ENCODE measurements at regions of chr1 and their contacts with region 1.

Region 1: GRCh38 chr1:159071970-159072582 is 4.5 kb downstream of the AIM2 start:
- DNase-seq: no peak
- ATAC-seq: no peak
- H3K4me3 ChIP-seq: no peak overlapping the region
- H3K27ac ChIP-seq: no peak overlapping the region
- H3K4me1 ChIP-seq: no peaks in the 10 kb centered on the region
- H3K27me3 ChIP-seq: no peaks in the 10 kb centered on the region
- CTCF ChIP-seq: peak; percentile 59

Region 2: GRCh38 chr1:158203693-158204457 is 868.2 kb before region 1 on chr1:
- intact Hi-C with region 1: loop called in 1 of 2 experiments (anchors 5 kb)
- DNase-seq: no peak
- ATAC-seq: peak in 2 of 4 donors; percentile 54 to 61
- H3K4me3 ChIP-seq: no peak overlapping the region
- H3K27ac ChIP-seq: no peak overlapping the region
- H3K4me1 ChIP-seq: no peaks in the 10 kb centered on the region
- H3K27me3 ChIP-seq: no peaks in the 10 kb centered on the region
- CTCF ChIP-seq: peak; percentile 79

Region 3: DNA sequence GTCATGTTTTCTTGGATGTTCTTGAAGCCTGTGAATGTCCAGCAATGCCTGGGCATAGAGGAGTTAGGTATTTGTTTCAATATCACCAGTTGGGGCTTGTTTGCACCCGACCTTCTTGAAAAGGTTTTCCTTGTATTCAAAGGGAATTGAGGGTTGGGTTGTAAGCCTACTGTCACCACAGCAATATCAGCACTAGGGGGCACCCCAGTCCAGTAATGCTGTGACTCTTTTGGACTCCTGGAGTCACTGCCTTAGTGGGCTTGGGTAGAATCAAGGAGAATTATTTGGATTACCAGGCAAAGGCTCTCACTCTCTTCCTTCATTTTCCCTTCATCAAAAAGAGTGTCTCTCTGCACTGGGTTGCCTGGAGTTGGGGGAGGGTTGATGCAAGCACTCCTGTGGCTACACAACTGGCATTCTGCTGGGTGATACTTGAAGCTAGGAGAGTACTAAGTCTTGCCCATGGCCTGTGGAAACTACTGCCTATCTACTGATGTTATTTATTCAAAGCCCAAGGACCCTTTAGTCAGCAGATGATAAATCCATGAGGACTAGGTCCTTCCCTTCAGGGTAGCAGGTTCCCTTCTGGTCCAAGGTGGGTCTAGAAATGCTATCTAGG is 565.6 kb before region 1 on chr1:
- intact Hi-C with region 1: loop called in 1 of 2 experiments (anchors 10 kb)
- DNase-seq: no peak
- ATAC-seq: no peak
- H3K4me3 ChIP-seq: no peak overlapping the region
- H3K27ac ChIP-seq: no peak overlapping the region
- H3K4me1 ChIP-seq: no peaks in the 10 kb centered on the region
- H3K27me3 ChIP-seq: no peaks in the 10 kb centered on the region
- CTCF ChIP-seq: no peak